HepG2 (cell line): ENCODE measurements at regions of chr16 and their contacts with region 1.

Region 1: DNA sequence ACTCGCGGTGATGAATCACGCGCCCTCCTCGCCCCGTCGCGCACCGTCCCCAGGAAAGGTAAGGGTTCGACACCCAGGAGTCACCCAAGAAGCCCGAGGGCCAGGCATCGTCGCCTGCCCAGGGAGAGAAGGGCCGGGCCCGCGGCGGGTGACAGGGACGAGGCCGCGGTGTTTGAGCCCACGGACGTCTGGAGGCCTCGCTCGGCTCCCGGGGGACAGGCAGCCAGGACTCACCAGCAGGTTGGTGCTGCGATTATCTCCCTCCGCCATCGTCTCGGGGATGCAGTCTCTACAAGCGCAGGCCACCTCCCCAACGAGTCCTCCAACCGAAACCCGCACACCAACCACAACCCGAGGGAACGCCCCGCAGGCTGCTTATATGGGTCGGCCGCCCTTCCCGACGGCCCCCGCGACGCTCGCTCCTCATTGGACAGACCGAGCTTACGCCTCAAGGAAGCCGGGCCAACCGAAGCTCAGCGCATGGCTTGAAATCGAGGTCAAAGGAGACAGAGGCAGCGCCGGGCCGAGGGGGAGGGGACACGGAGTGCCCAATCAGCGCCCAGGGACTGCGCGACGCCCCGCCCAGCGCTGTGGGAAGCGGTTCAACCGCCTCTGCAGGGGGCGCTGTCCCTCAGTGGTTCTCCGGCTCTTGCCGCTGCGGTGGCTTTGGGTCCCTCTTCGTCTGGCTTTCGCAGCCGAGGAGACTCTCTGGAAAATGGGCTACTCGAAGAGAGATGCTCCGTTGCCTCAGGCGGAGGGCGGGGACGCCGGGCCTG is at the start of gene ARL6IP1:
- DNase-seq: peak; percentile 100
- ATAC-seq: peak; percentile 95
- H3K4me3 ChIP-seq: peak within 1 kb of the TSS; percentile 88 to 100 (median 95)
- H3K27ac ChIP-seq: peak within 1 kb of the TSS; percentile 86
- H3K4me1 ChIP-seq: peaks cover 65% of the 10 kb centered on the region
- H3K27me3 ChIP-seq: no peaks in the 10 kb centered on the region; a peak in 1 of 5 replicates
- CTCF ChIP-seq: peak; percentile 100
- EP300 ChIP-seq: peak; percentile 53 to 77; a peak in 3 of 4 replicates
- POLR2A ChIP-seq: peak; percentile 100
- RAD21 ChIP-seq: peak; percentile 91
- total RNA-seq, gene ARL6IP1: 273 and 373 TPM in 2 replicates

Region 2: GRCh38 chr16:18789850-18790724 is 11.3 kb before region 1 on chr16 and contains the start of gene RPS15A:
- CTCF ChIA-PET with region 1: no interaction called
- POLR2A ChIA-PET with region 1: interaction called, 545 read pairs
- in situ Hi-C with region 1: no loop called
- intact Hi-C with region 1: loop called (anchors 1 kb)
- DNase-seq: peak; percentile 100
- ATAC-seq: peak; percentile 96
- H3K4me3 ChIP-seq: peak within 1 kb of the TSS; percentile 74 to 98 (median 96)
- H3K27ac ChIP-seq: peak within 1 kb of the TSS; percentile 78
- H3K4me1 ChIP-seq: peaks cover 62% of the 10 kb centered on the region
- H3K27me3 ChIP-seq: peaks cover 0 to 7% of the 10 kb centered on the region in 2 experiments; a peak in 1 of 5 replicates
- CTCF ChIP-seq: peak; percentile 3; the same call in 1 of the 2 replicates
- EP300 ChIP-seq: peak in 1 of 2 experiments; percentile 38; a peak in 2 of 4 replicates
- POLR2A ChIP-seq: peak; percentile 96 to 99
- RAD21 ChIP-seq: peak; percentile 43; the same call in 1 of the 2 replicates
- total RNA-seq, gene RPS15A: 5,489 and 6,421 TPM in 2 replicates

Region 3: GRCh38 chr16:18839555-18839954 is 38.2 kb after region 1 on chr16:
- CTCF ChIA-PET with region 1: no interaction called
- POLR2A ChIA-PET with region 1: interaction called, 8 read pairs
- in situ Hi-C with region 1: no loop called
- intact Hi-C with region 1: loop called (anchors 5 kb)
- DNase-seq: peak; percentile 66
- ATAC-seq: peak; percentile 57; the same call in 2 of the 3 replicates
- H3K4me3 ChIP-seq: no peak overlapping the region
- H3K27ac ChIP-seq: no peak overlapping the region
- H3K4me1 ChIP-seq: no peaks in the 10 kb centered on the region
- H3K27me3 ChIP-seq: no peaks in the 10 kb centered on the region
- CTCF ChIP-seq: no peak
- EP300 ChIP-seq: no peak
- POLR2A ChIP-seq: no peak
- RAD21 ChIP-seq: no peak

Region 4: GRCh38 chr16:18932243-18932981 is 131.0 kb after region 1 on chr16:
- CTCF ChIA-PET with region 1: no interaction called
- POLR2A ChIA-PET with region 1: interaction called, 15 read pairs
- in situ Hi-C with region 1: no loop called
- intact Hi-C with region 1: no loop called
- DNase-seq: peak; percentile 46
- ATAC-seq: no peak
- H3K4me3 ChIP-seq: no peak overlapping the region
- H3K27ac ChIP-seq: no peak overlapping the region
- H3K4me1 ChIP-seq: peaks cover 61% of the 10 kb centered on the region
- H3K27me3 ChIP-seq: no peaks in the 10 kb centered on the region
- CTCF ChIP-seq: no peak
- EP300 ChIP-seq: peak in 1 of 2 experiments; percentile 52; a peak in 1 of 4 replicates
- POLR2A ChIP-seq: no peak
- RAD21 ChIP-seq: no peak

Region 5: DNA sequence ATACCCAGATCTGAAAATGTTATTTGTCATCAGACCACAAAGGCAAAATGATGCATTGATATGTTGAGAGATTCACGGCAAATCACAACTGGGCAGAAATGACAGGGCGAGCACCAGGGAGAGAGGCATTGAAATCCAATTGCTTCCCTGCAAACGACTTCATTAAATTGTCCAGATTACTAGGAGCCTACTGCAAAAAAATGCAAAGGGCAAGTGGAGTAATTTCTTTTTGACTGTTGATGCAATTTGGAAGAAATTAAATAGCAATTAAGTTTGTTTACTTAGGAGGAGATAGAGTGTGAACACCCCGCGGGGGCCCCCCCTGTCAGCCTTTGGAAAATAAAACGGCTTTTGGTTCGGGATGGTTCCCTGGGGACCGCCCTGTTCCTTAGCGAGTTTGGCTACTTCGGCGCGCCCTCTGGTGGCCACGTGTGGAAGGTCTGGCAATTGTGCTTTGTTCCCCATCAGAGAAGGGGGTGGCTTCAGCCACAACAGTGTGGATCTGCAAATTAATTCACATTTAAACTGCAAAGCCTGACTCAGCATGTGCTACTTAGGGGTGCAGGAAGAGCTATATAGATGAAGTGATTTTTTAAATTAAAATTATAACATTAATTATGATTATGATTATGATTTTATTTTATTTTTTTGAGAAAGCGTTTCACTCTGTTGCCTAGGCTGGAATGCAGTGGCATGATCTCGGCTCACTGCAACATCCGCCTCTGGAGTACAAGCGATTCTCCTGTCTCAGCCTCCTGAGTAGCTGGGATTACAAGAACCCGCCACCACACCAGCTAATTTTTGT is 167.9 kb after region 1 on chr16:
- CTCF ChIA-PET with region 1: interaction called, 11 read pairs
- POLR2A ChIA-PET with region 1: no interaction called
- in situ Hi-C with region 1: no loop called
- intact Hi-C with region 1: loop called (anchors 1 kb)
- DNase-seq: peak; percentile 66
- ATAC-seq: peak; percentile 96
- H3K4me3 ChIP-seq: peak overlapping the region in 2 of 3 experiments; percentile 8 to 10; a peak in 2 of 6 replicates
- H3K27ac ChIP-seq: no peak overlapping the region
- H3K4me1 ChIP-seq: peaks cover 6% of the 10 kb centered on the region
- H3K27me3 ChIP-seq: peaks cover 0 to 4% of the 10 kb centered on the region in 2 experiments; a peak in 2 of 5 replicates
- CTCF ChIP-seq: peak; percentile 94
- EP300 ChIP-seq: 0 out of 4 replicates have a peak, but pooled peaks of 1 of the 2 experiments have one; percentile 26
- POLR2A ChIP-seq: no peak
- RAD21 ChIP-seq: peak; percentile 92

Region 6: GRCh38 chr16:19094541-19095365 is 293.4 kb after region 1 on chr16:
- CTCF ChIA-PET with region 1: no interaction called
- POLR2A ChIA-PET with region 1: interaction called, 14 read pairs
- in situ Hi-C with region 1: no loop called
- intact Hi-C with region 1: no loop called
- DNase-seq: peak; percentile 88
- ATAC-seq: peak; percentile 83
- H3K4me3 ChIP-seq: peak overlapping the region in 1 of 3 experiments; percentile 3; a peak in 1 of 6 replicates
- H3K27ac ChIP-seq: no peak overlapping the region
- H3K4me1 ChIP-seq: peaks cover 40% of the 10 kb centered on the region
- H3K27me3 ChIP-seq: no peaks in the 10 kb centered on the region
- CTCF ChIP-seq: peak; percentile 45
- EP300 ChIP-seq: no peak
- POLR2A ChIP-seq: no peak
- RAD21 ChIP-seq: no peak